Activated CD8-positive, alpha-beta memory T cell treated with anti-CD3 and anti-CD28 coated beads, Interleukin-2, amount 10 ng/mL, durations not matched to agents 7 days and 5 days (primary cell): ENCODE measurements at regions of chr17 and their contacts with region 1.

Region 1: DNA sequence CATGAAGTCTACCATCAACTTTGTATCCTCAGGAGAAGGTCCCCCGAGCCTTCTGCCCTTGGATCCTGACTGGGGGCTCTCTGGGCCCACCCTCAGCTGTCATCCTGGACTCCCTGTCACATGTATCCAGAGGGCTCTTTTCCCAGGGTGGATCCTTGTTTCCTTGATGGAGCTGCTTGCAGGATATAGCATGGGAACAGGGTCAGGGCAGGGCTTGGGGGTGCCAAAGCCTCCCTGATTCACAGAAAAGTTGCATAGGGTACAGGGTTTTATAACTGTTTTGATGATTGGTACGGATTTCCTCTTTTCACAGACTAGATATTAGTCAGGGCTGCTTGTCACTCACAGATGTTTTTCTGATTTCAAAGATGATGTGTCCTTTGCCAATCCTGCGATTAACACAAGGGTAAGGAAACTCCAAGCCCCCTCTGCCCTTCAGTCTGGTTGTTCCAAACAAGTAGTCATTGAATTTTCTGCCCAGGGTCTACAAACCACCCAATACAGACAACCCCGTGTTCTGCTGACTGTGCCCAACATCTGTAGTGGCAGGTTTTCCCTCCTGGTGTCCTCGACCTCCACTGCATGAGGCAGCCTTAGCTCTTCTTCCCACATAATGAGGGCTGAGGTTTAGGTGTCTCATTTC is 20.6 kb upstream of the SLC35G3 start:
- DNase-seq: peak; percentile 67
- ATAC-seq: peak; percentile 59
- H3K4me3 Mint-ChIP-seq: peak overlapping the region; percentile 70
- H3K27ac Mint-ChIP-seq: peak overlapping the region; percentile 98
- H3K4me1 Mint-ChIP-seq: peaks cover 83% of the 10 kb centered on the region
- H3K27me3 Mint-ChIP-seq: no peaks in the 10 kb centered on the region

Region 2: DNA sequence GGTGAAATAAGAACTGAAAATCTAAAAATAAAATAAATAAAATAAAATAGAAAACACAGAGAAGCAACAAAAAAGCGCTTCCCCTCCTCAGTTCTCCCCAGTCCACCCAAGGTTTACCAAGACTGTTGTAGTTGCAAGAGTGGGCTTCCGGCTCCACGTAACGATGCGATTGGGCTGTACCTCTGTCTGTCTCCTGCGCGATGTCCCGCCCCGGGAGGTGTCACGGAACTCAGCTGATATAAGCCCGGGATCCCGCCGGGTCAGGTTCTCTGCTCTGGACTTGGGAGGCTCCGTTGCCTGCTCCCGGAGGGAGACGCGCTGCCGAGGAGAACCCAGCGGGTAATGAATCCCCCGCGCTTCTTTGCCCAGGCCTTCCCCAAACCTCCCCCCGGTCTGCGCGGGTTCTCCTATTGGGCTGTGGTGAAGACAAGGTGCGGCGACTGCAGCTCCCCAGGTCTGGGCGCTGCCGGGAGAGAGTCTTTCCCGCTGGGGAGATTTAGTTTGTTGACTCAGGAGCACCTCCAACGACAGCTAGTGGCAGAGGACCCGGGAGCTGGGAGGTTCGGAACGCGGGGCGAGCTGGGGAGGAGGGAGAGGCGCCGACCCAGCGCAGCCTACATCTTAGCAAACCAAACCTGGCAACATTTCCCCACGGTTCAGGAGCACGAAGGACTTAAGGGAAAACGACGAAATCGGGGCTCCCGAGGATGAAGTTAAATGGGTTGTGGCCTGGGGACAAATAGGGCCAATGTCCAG is 28.2 kb after region 1 on chr17 and contains the start of gene SLFN5:
- CTCF ChIA-PET with region 1: interaction called, 58 read pairs
- DNase-seq: peak; percentile 97
- ATAC-seq: peak; percentile 78
- H3K4me3 Mint-ChIP-seq: peak within 1 kb of the TSS; percentile 100
- H3K27ac Mint-ChIP-seq: peak within 1 kb of the TSS; percentile 99
- H3K4me1 Mint-ChIP-seq: peaks cover 63% of the 10 kb centered on the region
- H3K27me3 Mint-ChIP-seq: no peaks in the 10 kb centered on the region
- total RNA-seq, gene SLFN5: 158 to 193 TPM